ENCODE measurements at regions of chr3 and their contacts with region 1.

Region 1: GRCh38 chr3:114383875-114384557 is 90.2 kb downstream of the TIGIT start:
- DNase-seq: peak; percentile 26 to 78 (median 50)
- ATAC-seq: peak; percentile 97
- H3K4me3 ChIP-seq: peak overlapping the region; percentile 27
- H3K4me3 Mint-ChIP-seq: peak overlapping the region; percentile 58
- H3K27ac ChIP-seq: no peak overlapping the region
- H3K27ac Mint-ChIP-seq: no peak overlapping the region
- H3K4me1 ChIP-seq: peaks cover 11% of the 10 kb centered on the region
- H3K4me1 Mint-ChIP-seq: peaks cover 21% of the 10 kb centered on the region
- H3K27me3 ChIP-seq: no peaks in the 10 kb centered on the region
- H3K27me3 Mint-ChIP-seq: no peaks in the 10 kb centered on the region
- CTCF ChIP-seq: peak; percentile 89

Region 2: DNA sequence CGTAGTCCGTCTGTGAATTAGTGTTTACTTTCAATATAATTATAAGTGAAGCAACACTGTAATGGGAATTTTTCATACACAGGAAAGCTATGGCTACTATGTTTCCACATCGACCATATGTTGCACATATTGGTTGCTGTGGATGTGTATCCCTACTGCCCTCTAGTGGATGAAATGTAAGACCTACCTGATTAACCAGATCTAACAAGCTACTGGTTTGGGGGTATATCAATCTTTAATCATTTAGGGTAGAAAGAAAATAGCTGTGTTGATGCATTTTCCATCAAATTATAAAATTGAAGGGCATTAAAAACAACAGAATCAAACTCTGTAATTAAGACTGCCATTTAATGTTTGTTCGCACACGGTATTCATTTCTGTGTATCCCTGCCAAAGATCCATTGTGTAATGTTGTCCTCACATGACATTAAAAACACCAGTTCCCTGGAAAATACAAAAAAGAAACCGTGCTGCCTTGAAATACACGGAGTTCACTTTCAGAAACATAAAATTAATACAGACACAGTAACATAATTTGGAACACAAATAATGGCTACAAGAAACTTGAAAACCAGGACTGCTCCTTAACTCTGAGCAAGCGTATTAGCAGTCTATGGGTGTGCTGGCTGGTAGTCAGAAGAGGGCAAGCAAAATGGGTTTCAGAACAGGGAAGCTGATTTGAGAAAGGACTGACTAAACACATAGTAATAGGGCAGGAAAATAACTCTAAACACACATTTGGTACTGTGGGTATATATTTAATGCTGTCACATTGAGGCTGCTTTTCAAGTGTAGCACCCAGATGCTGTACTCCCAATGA is 34.9 kb after region 1 on chr3:
- CTCF ChIA-PET with region 1: interaction called, 17 read pairs
- POLR2A ChIA-PET with region 1: interaction called, 6 read pairs
- intact Hi-C with region 1: loop called (anchors 1 to 2 kb)
- DNase-seq: peak in 4 of 14 experiments; percentile 6 to 79 (median 78)
- ATAC-seq: peak; percentile 92
- H3K4me3 ChIP-seq: no peak overlapping the region
- H3K4me3 Mint-ChIP-seq: no peak overlapping the region
- H3K27ac ChIP-seq: no peak overlapping the region
- H3K27ac Mint-ChIP-seq: no peak overlapping the region
- H3K4me1 ChIP-seq: no peaks in the 10 kb centered on the region
- H3K4me1 Mint-ChIP-seq: peaks cover 6% of the 10 kb centered on the region
- H3K27me3 ChIP-seq: no peaks in the 10 kb centered on the region
- H3K27me3 Mint-ChIP-seq: no peaks in the 10 kb centered on the region
- CTCF ChIP-seq: peak; percentile 86